ENCODE measurements at regions of chr18 and their contacts with region 1.

Region 1: GRCh38 chr18:9304388-9305070 is 30.0 kb upstream of the TWSG1 start:
- DNase-seq: no peak
- H3K4me3 Mint-ChIP-seq: no peak overlapping the region
- H3K27ac Mint-ChIP-seq: no peak overlapping the region
- H3K4me1 Mint-ChIP-seq: no peaks in the 10 kb centered on the region
- H3K27me3 Mint-ChIP-seq: peaks cover 21% of the 10 kb centered on the region
- CTCF ChIP-seq: no peak

Region 2: DNA sequence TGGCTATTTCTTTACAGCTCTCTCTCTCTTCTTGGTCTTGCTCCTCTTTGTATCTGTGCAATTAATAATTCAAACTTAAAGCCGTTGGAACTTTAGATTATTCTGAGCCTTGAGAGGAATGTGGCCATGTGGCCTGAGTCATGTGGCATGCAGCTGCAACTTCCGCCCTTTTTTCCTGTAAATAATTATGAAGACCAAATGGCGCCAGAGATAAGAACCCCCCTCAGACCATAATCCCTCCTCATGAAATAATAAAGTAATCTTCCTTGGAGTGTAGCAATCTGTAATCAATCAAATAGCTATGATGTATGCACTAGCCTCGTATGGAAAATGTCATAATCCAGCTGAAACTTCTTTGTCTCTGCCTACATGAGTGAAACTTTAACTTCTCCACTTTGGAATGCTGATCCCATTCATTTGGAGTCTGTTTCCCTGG is 16.5 kb after region 1 on chr18:
- CTCF ChIA-PET with region 1: interaction called, 3 read pairs
- POLR2A ChIA-PET with region 1: interaction called, 3 read pairs
- intact Hi-C with region 1: loop called (anchors 1 kb)
- DNase-seq: no peak
- H3K4me3 Mint-ChIP-seq: no peak overlapping the region
- H3K27ac Mint-ChIP-seq: no peak overlapping the region
- H3K4me1 Mint-ChIP-seq: peaks cover 19% of the 10 kb centered on the region
- H3K27me3 Mint-ChIP-seq: no peaks in the 10 kb centered on the region
- CTCF ChIP-seq: no peak

Measured in MCF 10A (cell line).